Activated naive CD4-positive, alpha-beta T cell treated with anti-CD3 and anti-CD28 coated beads for 36 hours (primary cell): ENCODE measurements at regions of chrX and their contacts with region 1.

Region 1: DNA sequence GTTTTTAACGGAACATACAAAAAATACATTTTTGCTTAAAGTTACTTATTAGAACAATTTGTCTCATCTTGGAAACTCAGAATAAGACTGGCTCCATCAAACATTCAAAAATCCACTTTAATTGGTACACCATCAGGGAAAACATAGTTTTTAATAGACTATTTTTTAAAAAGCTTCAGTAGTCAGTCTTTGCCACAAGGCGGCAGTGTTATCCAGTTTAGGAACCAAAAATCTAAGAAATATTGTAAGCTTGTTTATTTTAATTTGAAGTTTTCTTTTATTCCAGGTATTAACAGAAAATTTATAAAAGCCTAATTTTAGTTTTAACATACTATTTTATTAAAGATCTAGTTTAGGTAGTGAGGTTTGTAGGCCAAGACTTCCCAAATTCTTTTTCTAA is 107.7 kb downstream of the APOOL start:
- DNase-seq: peak; percentile 16
- H3K4me3 Mint-ChIP-seq: no peak overlapping the region
- H3K27ac Mint-ChIP-seq: no peak overlapping the region
- H3K4me1 Mint-ChIP-seq: no peaks in the 10 kb centered on the region
- H3K27me3 Mint-ChIP-seq: no peaks in the 10 kb centered on the region

Region 2: GRCh38 chrX:85084770-85085393 is 26.5 kb before region 1 on chrX:
- CTCF ChIA-PET with region 1: interaction called, 3 read pairs
- intact Hi-C with region 1: loop called (anchors 2 kb)
- DNase-seq: peak; percentile 12
- H3K4me3 Mint-ChIP-seq: no peak overlapping the region
- H3K27ac Mint-ChIP-seq: no peak overlapping the region
- H3K4me1 Mint-ChIP-seq: no peaks in the 10 kb centered on the region
- H3K27me3 Mint-ChIP-seq: no peaks in the 10 kb centered on the region

Region 3: DNA sequence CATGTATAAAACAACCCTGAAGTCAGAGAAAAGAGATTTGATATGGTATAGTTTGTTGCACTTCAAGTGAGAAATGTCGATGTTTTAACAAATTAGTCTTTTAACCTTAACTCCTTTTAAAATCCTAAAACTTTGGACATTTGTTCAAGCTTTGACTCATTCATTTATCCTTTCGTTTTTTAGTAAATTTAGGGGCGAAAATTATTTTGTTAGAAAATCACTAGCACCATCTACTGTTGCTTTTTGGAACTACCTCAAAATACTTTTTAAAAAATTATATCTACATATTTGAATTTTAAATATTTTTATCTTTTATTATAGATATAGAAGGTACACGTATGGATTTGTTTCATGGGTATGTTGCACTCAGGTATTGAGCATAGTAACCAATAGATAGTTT is 433.3 kb after region 1 on chrX:
- CTCF ChIA-PET with region 1: interaction called, 6 read pairs
- intact Hi-C with region 1: loop called (anchors 1 kb)
- DNase-seq: no peak
- H3K4me3 Mint-ChIP-seq: no peak overlapping the region
- H3K27ac Mint-ChIP-seq: no peak overlapping the region
- H3K4me1 Mint-ChIP-seq: no peaks in the 10 kb centered on the region
- H3K27me3 Mint-ChIP-seq: no peaks in the 10 kb centered on the region